Naive thymus-derived CD8-positive, alpha-beta T cell (primary cell): ENCODE measurements at regions of chr16 and their contacts with region 1.

Region 1: GRCh38 chr16:401468-402348 is at the start of gene DECR2:
- DNase-seq: peak; percentile 90 to 100 (median 96)
- ATAC-seq: peak; percentile 78
- H3K4me3 Mint-ChIP-seq: peak within 1 kb of the TSS; percentile 85 to 95 (median 90)
- H3K27ac Mint-ChIP-seq: peak within 1 kb of the TSS; percentile 68 to 98 (median 96)
- H3K4me1 Mint-ChIP-seq: peaks cover 6 to 21% (median 17%) of the 10 kb centered on the region in 4 donors
- H3K27me3 Mint-ChIP-seq: no peaks in the 10 kb centered on the region
- polyA plus RNA-seq, gene DECR2: 7.4 to 12.2 (median 8.5) TPM

Region 2: GRCh38 chr16:346587-346986 is 55.1 kb before region 1 on chr16:
- POLR2A ChIA-PET with region 1: no interaction called
- DNase-seq: no peak
- ATAC-seq: no peak
- H3K4me3 Mint-ChIP-seq: peak overlapping the region in 1 of 10 donors; percentile 11
- H3K27ac Mint-ChIP-seq: peak overlapping the region in 2 of 10 donors; percentile 36 to 67
- H3K4me1 Mint-ChIP-seq: peaks cover 41 to 93% (median 83%) of the 10 kb centered on the region in 4 donors
- H3K27me3 Mint-ChIP-seq: no peaks in the 10 kb centered on the region

Region 3: GRCh38 chr16:370443-370842 is 31.3 kb before region 1 on chr16 and contains the start of gene MRPL28:
- POLR2A ChIA-PET with region 1: interaction called, 19 read pairs
- DNase-seq: peak; percentile 83 to 97 (median 92)
- ATAC-seq: peak; percentile 99
- H3K4me3 Mint-ChIP-seq: peak within 1 kb of the TSS; percentile 82 to 97 (median 90)
- H3K27ac Mint-ChIP-seq: peak within 1 kb of the TSS; percentile 85 to 96 (median 89)
- H3K4me1 Mint-ChIP-seq: peaks cover 5 to 24% (median 15%) of the 10 kb centered on the region in 4 donors
- H3K27me3 Mint-ChIP-seq: no peaks in the 10 kb centered on the region
- polyA plus RNA-seq, gene MRPL28: 57.4 to 66.6 (median 64.7) TPM

Region 4: DNA sequence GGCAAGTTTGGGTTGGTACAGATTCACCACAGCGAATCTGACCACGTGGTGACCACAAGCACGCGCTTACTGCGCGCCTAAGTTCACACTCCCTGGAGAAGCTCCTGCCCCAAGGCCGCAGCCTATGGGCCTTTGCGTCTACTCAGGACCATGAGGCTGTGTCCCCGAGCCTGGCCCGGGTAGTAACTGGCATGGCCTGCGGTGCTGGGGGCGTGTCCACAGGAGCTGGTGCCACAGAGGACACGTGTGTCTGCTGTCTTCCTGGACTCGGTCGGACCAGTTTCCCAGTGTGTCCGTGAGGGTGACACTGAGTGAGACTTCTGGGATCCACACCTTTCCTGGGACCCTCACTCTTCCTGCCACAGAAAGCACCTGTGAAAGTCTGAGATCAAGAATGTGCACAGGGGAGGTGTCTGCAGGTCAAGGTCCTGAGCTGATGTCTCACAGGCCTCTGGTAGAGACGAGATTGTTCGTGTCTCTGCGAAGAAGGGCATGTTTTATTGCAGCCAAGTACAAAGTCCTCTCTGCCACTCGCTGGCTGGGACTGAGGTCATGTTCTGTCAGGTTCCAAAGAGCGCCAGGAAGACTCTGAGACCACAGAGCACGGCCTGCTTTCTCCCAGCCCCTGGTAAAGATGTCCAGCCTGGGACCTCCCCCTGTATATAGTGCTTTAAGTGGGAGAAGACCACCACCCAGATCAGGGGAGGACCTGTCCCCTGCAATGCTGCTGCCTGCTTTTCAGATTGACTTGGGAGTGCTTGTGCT is 100.7 kb after region 1 on chr16:
- POLR2A ChIA-PET with region 1: no interaction called
- DNase-seq: no peak
- ATAC-seq: no peak
- H3K4me3 Mint-ChIP-seq: no peak overlapping the region
- H3K27ac Mint-ChIP-seq: peak overlapping the region in 1 of 10 donors; percentile 51
- H3K4me1 Mint-ChIP-seq: peaks cover 0 to 5% (median 0%) of the 10 kb centered on the region in 4 donors
- H3K27me3 Mint-ChIP-seq: no peaks in the 10 kb centered on the region